Upper lobe of right lung (tissue), 1 donor: ENCODE measurements at regions of chr10 and their contacts with region 1.

Region 1: GRCh38 chr10:86693721-86694369 is 25.5 kb downstream of the LDB3 start:
- DNase-seq: no peak
- ATAC-seq: peak; percentile 67
- H3K4me3 ChIP-seq: no peak overlapping the region
- H3K27ac ChIP-seq: no peak overlapping the region
- H3K4me1 ChIP-seq: peaks cover 4% of the 10 kb centered on the region
- H3K27me3 ChIP-seq: no peaks in the 10 kb centered on the region
- CTCF ChIP-seq: peak; percentile 72

Region 2: DNA sequence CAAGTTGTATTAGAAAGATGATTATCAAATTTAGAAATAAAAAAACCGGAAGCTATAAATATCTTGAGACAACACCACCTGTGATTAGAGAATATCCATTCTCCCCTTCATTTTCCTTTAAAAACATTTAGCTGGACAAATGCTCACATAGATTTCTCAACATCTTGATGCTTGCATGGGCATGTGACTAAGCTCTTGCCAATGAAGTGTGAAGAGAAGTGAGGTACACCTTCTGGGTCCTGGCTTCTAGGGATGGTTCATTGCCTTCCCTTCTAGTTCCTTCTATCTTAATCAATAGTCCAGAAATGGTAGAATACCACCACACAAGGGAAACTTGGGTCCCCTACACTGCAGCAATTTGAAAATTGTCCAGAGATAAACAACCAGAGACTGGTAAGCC is 213.3 kb before region 1 on chr10:
- intact Hi-C with region 1: no loop called
- DNase-seq: no peak
- ATAC-seq: no peak
- H3K4me3 ChIP-seq: no peak overlapping the region
- H3K27ac ChIP-seq: no peak overlapping the region
- H3K4me1 ChIP-seq: no peaks in the 10 kb centered on the region
- H3K27me3 ChIP-seq: no peaks in the 10 kb centered on the region
- CTCF ChIP-seq: no peak

Region 3: DNA sequence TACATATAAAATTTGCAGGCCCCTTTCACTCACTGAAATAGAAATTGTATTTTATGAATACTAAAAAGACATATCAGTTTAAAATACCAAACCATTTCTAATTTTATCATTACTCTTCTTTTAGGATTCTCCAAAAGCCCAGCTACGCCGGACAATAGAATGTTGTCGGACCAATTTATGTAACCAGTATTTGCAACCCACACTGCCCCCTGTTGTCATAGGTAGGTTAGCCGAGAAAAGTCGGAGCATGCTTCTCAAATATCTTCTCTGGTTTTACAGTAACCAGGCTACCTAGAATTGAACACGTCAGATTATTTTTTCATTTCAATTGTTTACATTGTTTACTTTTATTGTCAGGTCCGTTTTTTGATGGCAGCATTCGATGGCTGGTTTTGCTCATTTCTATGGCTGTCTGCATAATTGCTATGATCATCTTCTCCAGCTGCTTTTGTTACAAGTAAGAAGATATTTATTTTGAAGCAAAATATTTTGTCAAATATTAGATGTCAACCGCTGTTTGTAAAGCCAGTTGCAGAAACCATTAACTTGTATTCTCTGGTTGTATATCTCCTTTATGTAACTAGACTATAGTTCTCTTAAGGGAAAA is 205.9 kb after region 1 on chr10:
- intact Hi-C with region 1: loop called (anchors 10 kb)
- DNase-seq: no peak
- ATAC-seq: peak; percentile 89
- H3K4me3 ChIP-seq: no peak overlapping the region
- H3K27ac ChIP-seq: no peak overlapping the region
- H3K4me1 ChIP-seq: peaks cover 7% of the 10 kb centered on the region
- H3K27me3 ChIP-seq: no peaks in the 10 kb centered on the region
- CTCF ChIP-seq: peak; percentile 78

Region 4: DNA sequence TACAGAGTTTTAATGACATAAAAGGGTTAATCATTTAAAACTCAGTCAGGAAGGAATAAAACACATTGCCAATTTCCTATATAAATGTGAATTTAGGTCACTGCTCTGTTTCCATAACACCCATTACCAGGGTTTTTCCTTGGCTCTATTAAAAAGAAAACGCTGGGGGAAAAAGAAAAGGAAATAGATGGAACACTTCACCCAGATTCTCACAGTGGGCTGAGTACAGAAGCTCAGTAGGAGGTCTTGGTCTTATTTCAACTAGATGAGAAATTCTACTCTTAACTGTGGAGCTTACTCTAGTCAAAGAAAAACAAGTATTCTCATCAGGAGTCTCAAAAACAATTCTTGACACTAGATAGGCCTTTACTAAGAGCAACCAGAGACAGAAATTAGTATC is 364.3 kb after region 1 on chr10:
- intact Hi-C with region 1: no loop called
- DNase-seq: no peak
- ATAC-seq: no peak
- H3K4me3 ChIP-seq: no peak overlapping the region
- H3K27ac ChIP-seq: no peak overlapping the region
- H3K4me1 ChIP-seq: peaks cover 6% of the 10 kb centered on the region
- H3K27me3 ChIP-seq: no peaks in the 10 kb centered on the region
- CTCF ChIP-seq: no peak